HepG2 (cell line): ENCODE measurements at regions of chr14 and their contacts with region 1.

Region 1: DNA sequence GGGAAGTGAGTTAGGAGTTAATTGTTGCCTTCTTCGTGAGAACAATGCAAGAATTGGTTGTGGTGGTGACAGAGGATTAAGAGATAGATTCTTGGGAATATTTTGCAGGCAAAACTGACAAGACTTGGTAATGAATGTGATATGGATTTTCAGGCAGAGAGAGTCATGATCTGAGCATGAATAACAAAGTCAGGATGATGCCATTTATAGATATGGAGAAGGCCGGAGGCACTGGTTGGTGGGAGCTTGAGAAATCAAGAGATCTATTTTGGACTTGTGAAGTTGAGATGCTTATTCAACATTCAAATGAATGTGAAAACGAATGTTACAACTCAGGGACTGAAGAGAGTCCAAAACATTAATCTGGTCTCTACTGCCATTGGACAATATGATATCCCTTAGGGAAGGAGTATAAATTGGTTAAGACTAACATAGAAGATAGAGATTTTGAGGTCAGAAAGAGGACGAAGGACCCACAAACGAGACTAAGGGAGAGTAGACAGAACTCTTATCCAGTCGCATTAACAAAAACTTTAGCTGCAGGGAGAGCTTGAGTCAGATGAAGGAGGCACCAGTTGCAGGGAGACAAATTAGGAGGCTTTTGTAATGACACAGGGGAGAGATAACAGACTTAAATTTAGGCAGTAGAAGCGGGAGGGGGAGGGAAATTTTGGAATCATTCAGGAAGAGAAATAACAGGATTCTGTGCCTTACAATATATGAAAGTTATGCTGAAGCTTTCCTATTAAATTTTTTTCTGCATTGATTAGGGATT is 1090.6 kb downstream of the GALC start:
- DNase-seq: no peak
- ATAC-seq: no peak
- H3K4me3 ChIP-seq: no peak overlapping the region
- H3K27ac ChIP-seq: no peak overlapping the region
- H3K4me1 ChIP-seq: peaks cover 26% of the 10 kb centered on the region
- H3K27me3 ChIP-seq: no peaks in the 10 kb centered on the region
- CTCF ChIP-seq: no peak
- EP300 ChIP-seq: no peak
- POLR2A ChIP-seq: no peak
- RAD21 ChIP-seq: no peak

Region 2: GRCh38 chr14:86057018-86057667 is 845.2 kb before region 1 on chr14:
- CTCF ChIA-PET with region 1: no interaction called
- POLR2A ChIA-PET with region 1: no interaction called
- in situ Hi-C with region 1: no loop called
- intact Hi-C with region 1: loop called (anchors 5 kb)
- DNase-seq: peak; percentile 6
- ATAC-seq: no peak
- H3K4me3 ChIP-seq: no peak overlapping the region
- H3K27ac ChIP-seq: no peak overlapping the region
- H3K4me1 ChIP-seq: no peaks in the 10 kb centered on the region
- H3K27me3 ChIP-seq: no peaks in the 10 kb centered on the region
- CTCF ChIP-seq: peak; percentile 58
- EP300 ChIP-seq: no peak
- POLR2A ChIP-seq: no peak
- RAD21 ChIP-seq: no peak

Region 3: GRCh38 chr14:86462193-86462753 is 440.1 kb before region 1 on chr14:
- CTCF ChIA-PET with region 1: interaction called, 20 read pairs
- POLR2A ChIA-PET with region 1: no interaction called
- in situ Hi-C with region 1: loop called (anchors 10 kb)
- intact Hi-C with region 1: loop called (anchors 1 kb)
- DNase-seq: peak; percentile 40
- ATAC-seq: peak; percentile 80
- H3K4me3 ChIP-seq: no peak overlapping the region
- H3K27ac ChIP-seq: no peak overlapping the region
- H3K4me1 ChIP-seq: no peaks in the 10 kb centered on the region
- H3K27me3 ChIP-seq: peaks cover 0 to 3% of the 10 kb centered on the region in 2 experiments; a peak in 1 of 5 replicates
- CTCF ChIP-seq: peak; percentile 65
- EP300 ChIP-seq: no peak
- POLR2A ChIP-seq: no peak
- RAD21 ChIP-seq: peak; percentile 40; the same call in 1 of the 2 replicates

Region 4: GRCh38 chr14:86712176-86712575 is 190.2 kb before region 1 on chr14:
- CTCF ChIA-PET with region 1: no interaction called
- POLR2A ChIA-PET with region 1: no interaction called
- in situ Hi-C with region 1: no loop called
- intact Hi-C with region 1: loop called (anchors 2 kb)
- DNase-seq: peak; percentile 10
- ATAC-seq: no peak
- H3K4me3 ChIP-seq: no peak overlapping the region
- H3K27ac ChIP-seq: peak overlapping the region; percentile 38
- H3K4me1 ChIP-seq: peaks cover 69% of the 10 kb centered on the region
- H3K27me3 ChIP-seq: no peaks in the 10 kb centered on the region
- CTCF ChIP-seq: no peak
- EP300 ChIP-seq: peak in 1 of 2 experiments; percentile 32; a peak in 1 of 4 replicates
- POLR2A ChIP-seq: no peak
- RAD21 ChIP-seq: no peak

Region 5: GRCh38 chr14:86780876-86781510 is 121.4 kb before region 1 on chr14:
- CTCF ChIA-PET with region 1: no interaction called
- POLR2A ChIA-PET with region 1: no interaction called
- in situ Hi-C with region 1: no loop called
- intact Hi-C with region 1: loop called (anchors 5 kb)
- DNase-seq: peak; percentile 35
- ATAC-seq: peak; percentile 69
- H3K4me3 ChIP-seq: no peak overlapping the region
- H3K27ac ChIP-seq: no peak overlapping the region
- H3K4me1 ChIP-seq: peaks cover 31% of the 10 kb centered on the region
- H3K27me3 ChIP-seq: no peaks in the 10 kb centered on the region
- CTCF ChIP-seq: peak; percentile 37
- EP300 ChIP-seq: peak in 1 of 2 experiments; percentile 34; a peak in 1 of 4 replicates
- POLR2A ChIP-seq: no peak
- RAD21 ChIP-seq: no peak

Region 6: DNA sequence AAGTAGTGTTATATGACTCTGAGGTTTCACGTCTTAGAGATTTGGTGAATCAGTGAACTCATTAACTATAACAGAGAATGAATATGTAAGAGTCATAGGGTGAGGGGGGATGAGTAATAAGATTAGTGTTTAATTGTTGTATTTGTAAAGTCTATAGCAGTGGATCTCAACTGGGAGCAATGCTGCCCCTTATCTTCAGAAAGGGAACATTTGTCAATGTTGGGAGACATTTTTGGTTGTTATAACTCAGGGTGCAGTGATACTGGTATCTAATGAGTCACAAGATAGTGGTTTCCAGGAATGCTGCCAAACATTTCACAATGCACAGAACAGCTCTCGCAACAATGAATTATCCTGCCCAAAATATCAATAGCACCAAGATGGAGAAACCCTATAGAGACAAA is 103.1 kb before region 1 on chr14:
- CTCF ChIA-PET with region 1: no interaction called
- POLR2A ChIA-PET with region 1: no interaction called
- in situ Hi-C with region 1: loop called (anchors 10 kb)
- intact Hi-C with region 1: loop called (anchors 5 kb)
- DNase-seq: peak; percentile 72
- ATAC-seq: peak; percentile 31; the same call in 1 of the 3 replicates
- H3K4me3 ChIP-seq: no peak overlapping the region
- H3K27ac ChIP-seq: no peak overlapping the region
- H3K4me1 ChIP-seq: peaks cover 44% of the 10 kb centered on the region
- H3K27me3 ChIP-seq: no peaks in the 10 kb centered on the region
- CTCF ChIP-seq: no peak
- EP300 ChIP-seq: 0 out of 4 replicates have a peak, but pooled peaks of 1 of the 2 experiments have one; percentile 16
- POLR2A ChIP-seq: no peak
- RAD21 ChIP-seq: no peak